SK-N-SH (cell line): ENCODE measurements at regions of chr10 and their contacts with region 1.

Region 1: DNA sequence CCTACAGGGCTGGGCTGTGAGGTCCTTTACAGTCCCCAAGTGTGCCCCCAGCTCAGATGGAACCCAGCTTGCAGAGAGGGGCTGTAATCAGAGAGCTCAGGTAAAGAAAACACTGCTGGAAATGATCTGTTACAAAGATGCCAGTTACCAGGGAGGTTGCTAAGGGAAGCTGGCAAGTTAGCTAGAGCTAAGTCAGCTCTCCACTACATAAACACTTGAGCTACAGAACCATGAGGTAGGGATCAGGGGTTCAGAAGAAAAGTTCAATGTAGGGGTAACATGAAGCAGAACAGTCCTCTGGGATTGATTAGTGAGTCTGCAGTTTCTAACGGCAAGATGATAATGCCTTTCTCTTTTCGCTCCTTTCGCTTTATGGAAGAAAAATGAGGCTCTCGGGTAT is 53.1 kb upstream of the TM9SF3 start:
- DNase-seq: no peak
- H3K4me3 ChIP-seq: no peak overlapping the region
- H3K27ac ChIP-seq: no peak overlapping the region
- H3K4me1 ChIP-seq: peaks cover 0 to 4% of the 10 kb centered on the region in 2 experiments; a peak in 1 of 4 replicates
- H3K27me3 ChIP-seq: no peaks in the 10 kb centered on the region
- CTCF ChIP-seq: no peak
- EP300 ChIP-seq: no peak
- RAD21 ChIP-seq: no peak

Region 2: GRCh38 chr10:96501985-96502384 is 137.9 kb before region 1 on chr10:
- CTCF ChIA-PET with region 1: no interaction called
- POLR2A ChIA-PET with region 1: no interaction called
- DNase-seq: no peak
- H3K4me3 ChIP-seq: no peak overlapping the region
- H3K27ac ChIP-seq: no peak overlapping the region
- H3K4me1 ChIP-seq: peaks cover 0 to 4% of the 10 kb centered on the region in 2 experiments; a peak in 1 of 4 replicates
- H3K27me3 ChIP-seq: no peaks in the 10 kb centered on the region
- CTCF ChIP-seq: no peak
- EP300 ChIP-seq: no peak
- RAD21 ChIP-seq: no peak

Region 3: GRCh38 chr10:96532496-96532895 is 107.4 kb before region 1 on chr10:
- CTCF ChIA-PET with region 1: no interaction called
- POLR2A ChIA-PET with region 1: no interaction called
- DNase-seq: no peak
- H3K4me3 ChIP-seq: no peak overlapping the region
- H3K27ac ChIP-seq: no peak overlapping the region
- H3K4me1 ChIP-seq: peaks cover 7 to 9% of the 10 kb centered on the region in 2 experiments
- H3K27me3 ChIP-seq: no peaks in the 10 kb centered on the region
- CTCF ChIP-seq: no peak
- EP300 ChIP-seq: 0 out of 4 replicates have a peak, but pooled peaks of 1 of the 2 experiments have one; percentile 6
- RAD21 ChIP-seq: no peak

Region 4: GRCh38 chr10:96556003-96556402 is 83.9 kb before region 1 on chr10:
- CTCF ChIA-PET with region 1: no interaction called
- POLR2A ChIA-PET with region 1: no interaction called
- DNase-seq: peak; percentile 22
- H3K4me3 ChIP-seq: no peak overlapping the region
- H3K27ac ChIP-seq: no peak overlapping the region
- H3K4me1 ChIP-seq: no peaks in the 10 kb centered on the region
- H3K27me3 ChIP-seq: no peaks in the 10 kb centered on the region
- CTCF ChIP-seq: peak; percentile 58
- EP300 ChIP-seq: no peak
- RAD21 ChIP-seq: peak; percentile 67

Region 5: DNA sequence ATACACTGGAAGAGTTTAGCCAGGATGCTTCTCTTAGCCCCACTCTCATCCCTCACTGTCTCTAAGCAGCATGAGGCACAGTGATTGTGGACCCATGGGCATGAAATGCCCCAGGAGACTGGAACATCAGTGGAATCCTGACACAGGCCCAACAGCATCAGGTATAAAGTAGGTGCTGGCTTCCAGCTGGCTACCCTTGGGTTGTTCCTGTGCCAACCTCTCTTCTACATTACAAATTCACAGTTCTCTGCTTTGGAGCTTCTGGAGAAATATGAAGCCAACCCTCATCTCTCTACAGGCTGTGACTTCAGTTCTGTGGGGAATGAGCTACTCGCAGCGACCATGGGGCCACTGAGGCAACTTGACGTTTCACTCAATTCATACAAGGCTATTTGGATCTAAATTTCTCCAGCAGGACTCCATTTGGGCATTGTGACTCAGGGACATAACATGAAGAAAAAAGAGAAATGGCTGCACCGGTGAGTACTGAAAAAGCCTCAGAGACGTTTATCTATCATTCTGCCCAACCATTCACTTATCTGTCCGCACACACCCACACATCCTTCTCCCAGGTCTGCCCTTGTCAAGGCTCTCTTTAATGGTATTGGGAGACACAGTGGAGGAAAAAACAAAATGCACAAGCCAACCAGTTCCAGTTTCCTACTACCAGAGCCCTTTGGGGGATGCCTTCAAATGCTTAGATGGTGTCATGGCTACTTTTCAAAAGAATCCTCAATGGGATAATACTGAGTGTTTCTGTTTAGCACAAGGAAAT is 17.7 kb before region 1 on chr10:
- CTCF ChIA-PET with region 1: interaction called, 12 read pairs
- POLR2A ChIA-PET with region 1: no interaction called
- DNase-seq: no peak
- H3K4me3 ChIP-seq: no peak overlapping the region
- H3K27ac ChIP-seq: no peak overlapping the region
- H3K4me1 ChIP-seq: no peaks in the 10 kb centered on the region; a peak in 1 of 4 replicates
- H3K27me3 ChIP-seq: no peaks in the 10 kb centered on the region
- CTCF ChIP-seq: no peak
- EP300 ChIP-seq: no peak
- RAD21 ChIP-seq: no peak

Region 6: DNA sequence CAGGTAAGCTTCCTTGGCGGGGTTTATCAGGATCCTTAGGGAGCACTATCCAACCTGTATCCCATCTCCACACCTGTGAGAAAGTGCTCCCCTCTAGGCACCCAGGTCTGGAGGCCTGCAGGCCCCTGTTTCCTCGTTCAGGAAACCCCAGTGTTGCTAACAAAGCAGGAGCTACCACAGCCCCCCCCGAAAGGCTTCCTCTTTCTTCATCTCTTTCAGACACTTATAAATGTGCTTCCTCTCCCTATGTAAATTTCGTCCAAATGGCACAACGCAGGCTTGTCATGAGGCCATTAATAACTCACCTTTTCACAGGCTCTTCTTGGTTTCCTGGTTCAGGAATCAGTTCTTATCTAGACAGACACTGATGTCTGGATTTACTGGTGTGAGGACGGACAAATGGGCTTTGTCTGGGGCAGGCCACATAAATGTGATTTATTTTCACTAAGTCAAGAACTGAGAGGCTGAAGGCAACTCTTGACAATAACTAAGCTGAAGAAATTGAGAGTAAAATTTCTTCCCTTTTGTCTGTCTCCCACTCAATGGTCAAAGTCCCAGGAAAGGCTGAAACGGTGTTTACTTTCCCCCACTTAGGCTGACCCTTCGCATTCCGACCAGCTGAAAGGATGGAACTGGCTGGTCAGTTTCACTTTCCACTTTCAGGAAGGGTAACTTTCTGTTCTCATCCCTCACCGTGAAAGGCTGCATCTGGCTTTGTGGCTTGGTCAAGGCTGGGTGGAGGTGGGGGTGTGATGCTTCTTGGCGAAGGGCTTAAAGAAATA is 33.6 kb after region 1 on chr10:
- CTCF ChIA-PET with region 1: interaction called, 11 read pairs
- POLR2A ChIA-PET with region 1: no interaction called
- DNase-seq: no peak
- H3K4me3 ChIP-seq: no peak overlapping the region
- H3K27ac ChIP-seq: no peak overlapping the region
- H3K4me1 ChIP-seq: peaks cover 0 to 6% of the 10 kb centered on the region in 2 experiments; a peak in 1 of 4 replicates
- H3K27me3 ChIP-seq: no peaks in the 10 kb centered on the region
- CTCF ChIP-seq: no peak
- EP300 ChIP-seq: no peak
- RAD21 ChIP-seq: no peak

Region 7: GRCh38 chr10:96685306-96685705 is 45.4 kb after region 1 on chr10:
- CTCF ChIA-PET with region 1: interaction called, 10 read pairs
- POLR2A ChIA-PET with region 1: no interaction called
- DNase-seq: no peak
- H3K4me3 ChIP-seq: no peak overlapping the region
- H3K27ac ChIP-seq: no peak overlapping the region
- H3K4me1 ChIP-seq: no peaks in the 10 kb centered on the region; a peak in 1 of 4 replicates
- H3K27me3 ChIP-seq: no peaks in the 10 kb centered on the region
- CTCF ChIP-seq: no peak
- EP300 ChIP-seq: no peak
- RAD21 ChIP-seq: no peak

Region 8: DNA sequence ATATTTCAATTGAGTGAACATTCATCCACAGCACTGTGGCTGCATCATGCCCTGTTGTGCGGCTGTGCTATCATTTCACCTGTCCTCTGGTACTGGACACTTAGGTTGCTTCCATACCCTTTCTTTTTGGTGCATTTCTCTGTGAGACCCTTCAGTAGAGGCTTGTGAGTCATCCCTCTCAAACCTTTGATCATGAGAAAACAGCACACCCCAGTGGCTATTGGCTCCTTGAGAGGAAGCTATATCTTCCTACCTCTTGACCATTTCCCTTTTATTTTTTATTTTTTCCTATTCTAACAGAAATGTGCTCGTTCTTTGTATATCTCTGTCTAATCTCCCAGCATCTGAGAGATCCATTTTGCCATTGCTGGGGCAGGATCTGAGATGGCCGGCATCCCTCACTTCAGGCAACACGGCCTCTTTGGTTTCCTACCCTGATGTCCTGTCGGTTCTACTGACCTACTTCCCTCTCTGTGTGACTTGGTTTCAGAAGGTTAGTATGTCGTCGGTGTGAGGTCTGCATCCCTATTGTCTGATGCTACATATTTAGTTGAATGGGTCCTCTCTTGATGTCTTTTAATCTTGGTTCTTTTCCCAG is 104.2 kb after region 1 on chr10:
- CTCF ChIA-PET with region 1: interaction called, 15 read pairs
- POLR2A ChIA-PET with region 1: no interaction called
- DNase-seq: peak; percentile 33
- H3K4me3 ChIP-seq: no peak overlapping the region
- H3K27ac ChIP-seq: no peak overlapping the region
- H3K4me1 ChIP-seq: no peaks in the 10 kb centered on the region
- H3K27me3 ChIP-seq: no peaks in the 10 kb centered on the region
- CTCF ChIP-seq: peak; percentile 46
- EP300 ChIP-seq: no peak
- RAD21 ChIP-seq: peak; percentile 60

Region 9: DNA sequence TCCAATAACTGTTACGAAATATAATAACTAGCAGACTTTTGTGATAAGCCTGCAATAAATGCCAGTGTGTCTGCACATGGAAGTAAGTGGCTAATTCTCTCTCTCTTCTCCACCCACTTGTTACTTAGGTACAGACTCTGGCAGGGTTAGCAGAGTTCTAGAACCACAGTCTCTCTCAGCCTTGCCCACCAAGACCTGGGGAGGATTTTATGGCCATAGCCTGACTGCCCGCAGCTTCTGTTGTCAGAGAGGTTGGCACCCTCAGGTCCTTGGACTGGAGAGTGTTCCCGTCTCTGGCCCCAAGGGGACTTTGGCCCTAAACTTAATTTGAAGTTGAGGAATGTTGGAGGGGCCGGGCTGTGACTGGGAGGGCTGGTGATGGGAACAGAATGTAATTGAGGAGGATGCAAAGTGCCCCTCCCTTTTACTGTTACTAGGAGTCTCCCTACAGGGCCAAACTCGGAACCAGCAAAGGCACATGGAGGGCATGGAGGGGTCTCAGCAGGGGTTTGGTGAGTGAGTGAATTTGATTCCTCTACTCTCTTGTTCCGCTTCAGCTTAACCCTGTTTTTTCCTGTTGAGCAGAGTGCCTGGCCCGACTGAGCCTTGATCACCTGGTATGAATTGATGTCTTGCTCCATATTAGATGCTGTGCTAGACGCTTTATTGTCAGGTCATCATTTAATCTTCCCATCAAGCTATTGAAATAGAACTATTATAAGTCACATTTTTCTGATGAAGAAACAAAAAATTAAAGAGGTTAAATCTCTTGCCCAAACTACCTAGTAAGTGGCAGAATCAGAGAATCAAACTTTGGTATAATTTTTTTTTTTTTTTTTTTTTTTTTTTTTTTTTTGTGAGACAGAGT is 155.2 kb after region 1 on chr10:
- CTCF ChIA-PET with region 1: no interaction called
- POLR2A ChIA-PET with region 1: no interaction called
- DNase-seq: no peak
- H3K4me3 ChIP-seq: no peak overlapping the region
- H3K27ac ChIP-seq: no peak overlapping the region
- H3K4me1 ChIP-seq: no peaks in the 10 kb centered on the region
- H3K27me3 ChIP-seq: peaks cover 5% of the 10 kb centered on the region; the same call in 1 of the 2 replicates
- CTCF ChIP-seq: no peak
- EP300 ChIP-seq: no peak
- RAD21 ChIP-seq: no peak